ENCODE measurements at regions of chr5 and their contacts with region 1.

Region 1: GRCh38 chr5:21774791-21775190 is 1078.4 kb downstream of the CDH12 start:
- DNase-seq: peak; percentile 62 to 67
- H3K4me3 ChIP-seq: no peak overlapping the region
- H3K27ac ChIP-seq: no peak overlapping the region
- H3K4me1 ChIP-seq: no peaks in the 10 kb centered on the region
- H3K27me3 ChIP-seq: no peaks in the 10 kb centered on the region
- CTCF ChIP-seq: no peak

Region 2: GRCh38 chr5:21791304-21791703 is 16.5 kb after region 1 on chr5:
- CTCF ChIA-PET with region 1: no interaction called
- POLR2A ChIA-PET with region 1: no interaction called
- intact Hi-C with region 1: loop called (anchors 2 kb)
- DNase-seq: no peak
- H3K4me3 ChIP-seq: no peak overlapping the region
- H3K27ac ChIP-seq: no peak overlapping the region
- H3K4me1 ChIP-seq: no peaks in the 10 kb centered on the region
- H3K27me3 ChIP-seq: no peaks in the 10 kb centered on the region
- CTCF ChIP-seq: no peak

Measured in PC-9 (cell line).